Caco-2 (cell line): ENCODE measurements at regions of chr6 and their contacts with region 1.

Region 1: DNA sequence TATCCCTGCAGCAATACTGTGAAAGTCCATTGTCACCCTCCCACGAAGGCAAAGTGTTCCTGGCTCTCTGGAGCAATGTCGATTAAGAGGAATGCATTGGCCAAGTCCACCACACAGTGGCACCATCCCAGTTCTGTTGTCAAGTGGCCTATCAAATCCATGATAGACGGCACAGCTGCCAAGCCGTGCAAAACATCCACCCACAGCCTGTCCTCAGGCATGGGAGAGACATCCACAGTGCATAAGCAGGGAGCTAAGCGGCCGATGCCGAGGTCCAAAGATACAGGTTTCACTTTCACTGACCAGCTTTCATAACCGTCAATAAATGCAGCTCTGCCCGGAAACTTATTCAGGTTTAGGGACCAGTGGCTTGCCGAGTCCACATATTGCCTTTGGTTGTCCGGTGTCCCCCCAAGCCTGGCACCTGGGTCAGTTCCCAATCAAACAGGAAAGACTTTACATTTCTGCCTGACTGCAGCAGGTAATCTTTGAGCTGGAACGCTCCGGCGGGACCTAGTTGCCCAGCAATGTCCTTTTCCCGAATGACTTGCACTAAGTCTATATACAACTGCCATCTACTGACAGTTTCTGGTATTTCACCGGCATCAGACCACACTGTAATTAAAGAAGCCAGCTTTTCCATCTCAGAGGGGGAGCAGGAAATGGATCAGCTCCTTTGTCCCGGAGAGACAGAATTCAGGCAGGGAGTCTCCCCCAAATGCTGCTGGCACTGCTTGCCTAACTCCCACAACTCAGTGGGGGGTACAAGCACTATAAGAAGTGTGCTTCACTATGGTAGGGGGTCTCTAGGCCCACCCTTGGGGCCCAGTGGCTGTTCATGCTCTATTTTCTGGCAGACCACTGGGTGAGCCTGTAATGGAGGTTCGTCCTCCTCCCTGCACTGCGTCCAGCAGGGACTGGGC is 6.3 kb downstream of the ZKSCAN3 start:
- DNase-seq: peak; percentile 66 to 77
- H3K4me3 ChIP-seq: peak overlapping the region; percentile 44
- H3K4me3 Mint-ChIP-seq: peak overlapping the region; percentile 71
- H3K27ac Mint-ChIP-seq: no peak overlapping the region
- H3K4me1 ChIP-seq: 0 out of 2 replicates have a peak, but pooled peaks cover 16% of the 10 kb centered on the region
- H3K4me1 Mint-ChIP-seq: no peaks in the 10 kb centered on the region
- H3K27me3 ChIP-seq: no peaks in the 10 kb centered on the region
- H3K27me3 Mint-ChIP-seq: no peaks in the 10 kb centered on the region
- CTCF ChIP-seq: peak; percentile 68 to 70

Region 2: DNA sequence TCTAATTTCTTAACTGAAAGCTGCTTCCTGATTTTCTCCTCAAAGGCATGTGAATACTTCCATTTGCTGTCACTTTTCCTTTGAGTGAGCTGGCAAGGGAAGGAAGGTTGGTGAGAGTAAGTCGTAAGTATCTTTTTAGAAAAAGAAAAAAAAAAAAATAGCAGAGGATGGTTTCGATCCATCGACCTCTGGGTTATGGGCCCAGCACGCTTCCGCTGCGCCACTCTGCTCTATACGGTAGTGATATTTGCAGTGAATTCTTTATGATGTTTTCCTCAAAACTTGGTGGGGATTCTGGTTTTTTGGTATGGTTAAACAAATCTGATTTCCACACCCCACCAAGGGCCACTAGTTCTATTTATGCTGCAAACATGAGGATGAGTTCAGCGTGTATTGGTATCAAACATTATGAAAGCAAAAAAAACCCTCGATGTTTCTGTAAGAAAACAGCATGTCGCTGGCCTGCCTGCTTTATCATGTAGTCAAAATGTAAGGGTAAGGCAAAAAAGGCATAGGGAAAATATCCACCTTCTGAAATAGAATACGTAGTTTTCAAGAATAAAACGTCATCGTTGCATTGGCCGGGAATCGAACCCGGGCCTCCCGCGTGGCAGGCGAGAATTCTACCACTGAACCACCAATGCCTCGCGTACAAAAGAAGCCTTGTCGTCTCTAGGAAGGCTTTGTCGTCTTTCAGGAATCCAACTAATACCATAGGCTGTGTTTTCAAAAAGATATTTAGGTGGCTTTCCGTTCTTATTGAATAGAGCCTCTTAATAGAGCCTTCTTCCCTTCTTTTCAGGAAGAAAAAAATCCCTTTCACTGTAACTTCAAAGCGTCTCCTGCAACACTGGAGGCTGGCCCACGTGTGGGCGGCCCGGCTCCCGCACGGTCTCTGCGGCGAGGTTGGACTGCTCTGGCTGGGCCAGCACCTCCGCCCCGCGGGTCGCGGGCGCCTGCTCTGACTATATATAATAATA is 453.4 kb before region 1 on chr6:
- CTCF ChIA-PET with region 1: no interaction called
- POLR2A ChIA-PET with region 1: no interaction called
- intact Hi-C with region 1: loop called (anchors 2 kb)
- DNase-seq: peak; percentile 73 to 87
- H3K4me3 ChIP-seq: peak overlapping the region; percentile 41
- H3K4me3 Mint-ChIP-seq: peak overlapping the region; percentile 76
- H3K27ac Mint-ChIP-seq: peak overlapping the region; percentile 96
- H3K4me1 ChIP-seq: peaks cover 14% of the 10 kb centered on the region
- H3K4me1 Mint-ChIP-seq: peaks cover 9% of the 10 kb centered on the region
- H3K27me3 ChIP-seq: no peaks in the 10 kb centered on the region
- H3K27me3 Mint-ChIP-seq: peaks cover 10% of the 10 kb centered on the region
- CTCF ChIP-seq: no peak

Region 3: GRCh38 chr6:28136585-28137504 is 219.2 kb before region 1 on chr6:
- CTCF ChIA-PET with region 1: interaction called, 8 read pairs
- POLR2A ChIA-PET with region 1: interaction called, 5 read pairs
- intact Hi-C with region 1: loop called (anchors 1 kb)
- DNase-seq: peak; percentile 84 to 87
- H3K4me3 ChIP-seq: peak overlapping the region; percentile 77
- H3K4me3 Mint-ChIP-seq: peak overlapping the region; percentile 96
- H3K27ac Mint-ChIP-seq: peak overlapping the region; percentile 93
- H3K4me1 ChIP-seq: peaks cover 6% of the 10 kb centered on the region; the same call in 1 of the 2 replicates
- H3K4me1 Mint-ChIP-seq: peaks cover 13% of the 10 kb centered on the region
- H3K27me3 ChIP-seq: no peaks in the 10 kb centered on the region
- H3K27me3 Mint-ChIP-seq: no peaks in the 10 kb centered on the region
- CTCF ChIP-seq: no peak

Region 4: DNA sequence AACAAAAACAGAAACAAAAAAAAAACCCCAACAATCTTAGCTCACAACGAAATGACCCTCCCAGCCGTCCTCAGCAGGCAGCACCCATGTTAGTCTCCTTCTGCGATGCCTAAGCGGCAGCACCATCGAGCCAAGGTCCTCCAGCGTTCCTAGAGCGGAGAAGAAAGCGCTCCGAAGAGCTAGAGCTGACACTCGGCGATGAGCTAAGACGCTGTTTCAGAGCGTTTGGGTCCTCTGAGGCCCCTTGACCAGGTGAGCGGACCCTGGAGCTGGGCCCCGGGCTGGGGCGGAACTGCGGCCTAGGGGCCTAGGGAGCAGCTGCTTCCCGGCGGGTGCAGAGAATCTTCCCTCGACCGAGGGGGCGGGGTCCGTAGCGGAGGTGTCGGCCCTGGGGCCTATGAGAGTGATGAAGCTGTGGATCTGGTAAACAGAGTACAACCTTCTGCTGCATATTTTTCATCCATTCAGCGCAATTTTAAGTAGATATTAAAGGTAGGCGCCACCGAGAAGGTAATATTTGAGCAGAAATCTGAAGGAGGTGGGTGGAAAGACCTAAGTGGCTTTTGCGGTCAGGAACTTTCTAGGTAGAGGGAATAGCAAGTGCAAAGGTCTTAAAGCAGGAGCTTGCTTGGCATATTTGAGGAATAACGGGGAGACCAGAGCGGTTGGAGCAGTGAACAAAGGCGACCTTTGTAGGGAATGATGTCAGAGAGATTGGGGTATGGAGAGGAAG is 88.9 kb before region 1 on chr6 and contains the start of gene ZSCAN26:
- CTCF ChIA-PET with region 1: interaction called, 9 read pairs
- POLR2A ChIA-PET with region 1: no interaction called
- intact Hi-C with region 1: loop called (anchors 1 kb)
- DNase-seq: peak; percentile 92
- H3K4me3 ChIP-seq: peak within 1 kb of the TSS; percentile 57
- H3K4me3 Mint-ChIP-seq: no peak within 1 kb of the TSS
- H3K27ac Mint-ChIP-seq: no peak within 1 kb of the TSS
- H3K4me1 ChIP-seq: peaks cover 15% of the 10 kb centered on the region
- H3K4me1 Mint-ChIP-seq: no peaks in the 10 kb centered on the region
- H3K27me3 ChIP-seq: no peaks in the 10 kb centered on the region
- H3K27me3 Mint-ChIP-seq: no peaks in the 10 kb centered on the region
- CTCF ChIP-seq: no peak
- total RNA-seq, gene ZSCAN26: 7.2 and 7.8 TPM in 2 replicates

Region 5: DNA sequence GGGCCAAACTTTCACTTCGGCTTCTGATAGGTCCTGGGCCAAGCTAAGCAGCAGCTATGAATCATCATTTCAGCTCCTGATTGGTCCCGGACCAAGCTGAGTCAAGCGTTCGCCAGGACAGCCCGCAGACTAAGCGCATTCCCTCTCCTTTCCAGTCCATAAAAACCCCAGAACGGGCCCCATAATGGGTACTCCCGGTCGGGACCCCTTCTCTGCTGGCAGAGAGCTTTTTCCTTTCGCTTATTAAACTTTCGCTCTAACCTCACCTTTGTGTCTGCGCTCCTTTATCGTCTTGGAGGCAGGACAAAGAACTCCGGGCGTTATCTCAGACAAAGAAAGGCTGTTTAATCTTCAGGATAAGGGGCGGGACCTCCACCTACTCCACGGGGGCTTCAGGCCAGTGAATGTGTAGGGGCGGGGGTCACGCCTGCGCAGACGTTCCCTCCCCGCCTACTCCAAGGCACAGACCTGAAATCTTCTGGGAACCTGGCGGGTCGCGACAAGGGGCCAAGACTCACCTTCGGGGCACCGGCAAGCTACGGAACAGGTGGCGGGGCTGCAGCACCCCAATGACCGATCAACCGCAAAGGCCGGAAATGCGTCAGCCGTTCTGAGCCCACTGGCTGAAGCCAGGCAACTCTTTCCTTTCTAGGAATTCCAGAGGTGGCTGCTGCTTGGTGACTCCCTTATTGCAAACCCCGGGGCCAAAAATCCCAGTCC is 20.3 kb before region 1 on chr6 and contains the start of gene ZSCAN31:
- CTCF ChIA-PET with region 1: interaction called, 16 read pairs
- POLR2A ChIA-PET with region 1: interaction called, 11 read pairs
- intact Hi-C with region 1: no loop called
- DNase-seq: peak; percentile 92 to 95
- H3K4me3 ChIP-seq: peak within 1 kb of the TSS; percentile 54
- H3K4me3 Mint-ChIP-seq: no peak within 1 kb of the TSS
- H3K27ac Mint-ChIP-seq: no peak within 1 kb of the TSS
- H3K4me1 ChIP-seq: no peaks in the 10 kb centered on the region; the same call in 1 of the 2 replicates
- H3K4me1 Mint-ChIP-seq: peaks cover 16% of the 10 kb centered on the region
- H3K27me3 ChIP-seq: no peaks in the 10 kb centered on the region
- H3K27me3 Mint-ChIP-seq: peaks cover 2% of the 10 kb centered on the region
- CTCF ChIP-seq: no peak
- total RNA-seq, gene ZSCAN31: 1.7 and 3.4 TPM in 2 replicates